OCI-LY7 (cell line): ENCODE measurements at regions of chr19 and their contacts with region 1.

Region 1: DNA sequence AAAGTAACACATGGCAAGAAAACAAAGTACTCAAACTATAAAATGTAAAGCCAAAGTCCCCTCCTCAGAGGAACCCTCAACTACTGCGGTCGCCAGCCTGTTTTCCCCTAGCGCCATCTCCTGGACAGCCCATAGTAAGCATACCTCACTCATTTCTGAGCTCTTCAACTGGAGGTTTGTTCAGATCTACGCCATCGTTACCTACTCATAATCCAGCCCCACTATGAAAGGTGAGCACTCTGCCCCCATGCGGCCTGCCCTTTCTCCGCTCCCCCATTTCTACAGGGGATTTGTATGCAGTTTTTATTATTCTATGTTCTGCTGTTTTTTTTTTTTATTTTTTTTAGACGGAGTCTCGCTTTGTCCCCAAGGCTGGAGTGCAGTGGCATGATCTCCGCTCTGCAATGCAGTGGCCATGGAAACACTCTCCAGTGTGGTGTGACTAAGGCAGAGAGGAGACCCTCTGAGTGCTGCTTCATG is 26.2 kb downstream of the OPA3 start:
- DNase-seq: peak; percentile 92
- H3K4me3 ChIP-seq: no peak overlapping the region
- H3K27ac ChIP-seq: no peak overlapping the region
- H3K4me1 ChIP-seq: peaks cover 36% of the 10 kb centered on the region
- CTCF ChIP-seq: peak; percentile 98

Region 2: GRCh38 chr19:45506246-45506990 is 52.0 kb before region 1 on chr19:
- CTCF ChIA-PET with region 1: interaction called, 3 read pairs
- POLR2A ChIA-PET with region 1: interaction called, 3 read pairs
- intact Hi-C with region 1: loop called (anchors 5 kb)
- DNase-seq: peak; percentile 97
- H3K4me3 ChIP-seq: peak overlapping the region; percentile 92
- H3K27ac ChIP-seq: peak overlapping the region; percentile 85
- H3K4me1 ChIP-seq: peaks cover 31% of the 10 kb centered on the region
- CTCF ChIP-seq: peak; percentile 85

Region 3: DNA sequence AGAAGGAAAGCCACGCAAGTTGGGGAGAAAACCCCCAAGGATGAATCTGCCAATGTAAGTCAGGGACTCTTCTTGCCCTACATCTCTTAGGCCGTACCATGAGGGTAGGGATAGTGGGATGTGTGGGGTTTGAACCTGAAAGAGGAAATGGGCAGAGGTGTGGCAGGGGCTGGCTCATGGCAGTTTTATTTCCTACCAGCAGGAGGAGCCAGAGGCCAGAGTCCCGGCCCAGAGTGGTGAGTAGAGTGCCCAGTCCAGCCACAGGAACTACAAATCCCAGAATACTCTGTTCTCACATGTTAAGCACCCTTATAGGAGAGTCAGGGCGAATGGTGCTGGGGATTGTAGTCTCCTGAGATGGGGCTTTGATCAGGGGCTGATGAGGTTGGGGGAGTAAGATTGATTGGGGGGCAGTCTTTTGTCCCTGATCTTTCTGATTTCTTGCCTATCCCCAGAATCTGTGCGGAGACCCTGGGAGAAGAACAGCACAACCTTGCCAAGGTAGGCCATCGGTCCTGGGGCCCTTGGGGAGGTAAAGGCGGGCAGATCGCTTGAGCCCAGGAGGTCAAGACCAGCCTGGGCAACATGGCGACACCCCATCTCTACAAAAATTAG is 34.7 kb before region 1 on chr19:
- CTCF ChIA-PET with region 1: no interaction called
- POLR2A ChIA-PET with region 1: no interaction called
- intact Hi-C with region 1: loop called (anchors 1 kb)
- DNase-seq: peak; percentile 90
- H3K4me3 ChIP-seq: no peak overlapping the region
- H3K27ac ChIP-seq: no peak overlapping the region
- H3K4me1 ChIP-seq: peaks cover 4% of the 10 kb centered on the region
- CTCF ChIP-seq: peak; percentile 98